ENCODE measurements at regions of chr17 and their contacts with region 1.

Region 1: GRCh38 chr17:28726226-28727130 is at the start of gene TLCD1:
- DNase-seq: peak; percentile 72 to 96
- H3K4me3 ChIP-seq: peak within 1 kb of the TSS; percentile 53 to 83
- H3K27ac ChIP-seq: peak within 1 kb of the TSS; percentile 93 to 95
- H3K4me1 ChIP-seq: peaks cover 13 to 23% of the 10 kb centered on the region in 2 donors
- H3K27me3 ChIP-seq: no peaks in the 10 kb centered on the region
- CTCF ChIP-seq: peak; percentile 99 to 100 (median 100)
- total RNA-seq, gene TLCD1: not detected

Region 2: GRCh38 chr17:28698253-28698941 is 28.1 kb before region 1 on chr17:
- intact Hi-C with region 1: no loop called
- DNase-seq: no peak
- H3K4me3 ChIP-seq: no peak overlapping the region
- H3K27ac ChIP-seq: no peak overlapping the region
- H3K4me1 ChIP-seq: no peaks in the 10 kb centered on the region
- H3K27me3 ChIP-seq: no peaks in the 10 kb centered on the region
- CTCF ChIP-seq: no peak

Region 3: GRCh38 chr17:28750178-28751047 is 23.9 kb after region 1 on chr17:
- intact Hi-C with region 1: loop called (anchors 1 kb)
- DNase-seq: peak; percentile 69 to 96
- H3K4me3 ChIP-seq: no peak overlapping the region
- H3K27ac ChIP-seq: no peak overlapping the region
- H3K4me1 ChIP-seq: peaks cover 10 to 16% of the 10 kb centered on the region in 2 donors
- H3K27me3 ChIP-seq: no peaks in the 10 kb centered on the region
- CTCF ChIP-seq: peak; percentile 100

Region 4: DNA sequence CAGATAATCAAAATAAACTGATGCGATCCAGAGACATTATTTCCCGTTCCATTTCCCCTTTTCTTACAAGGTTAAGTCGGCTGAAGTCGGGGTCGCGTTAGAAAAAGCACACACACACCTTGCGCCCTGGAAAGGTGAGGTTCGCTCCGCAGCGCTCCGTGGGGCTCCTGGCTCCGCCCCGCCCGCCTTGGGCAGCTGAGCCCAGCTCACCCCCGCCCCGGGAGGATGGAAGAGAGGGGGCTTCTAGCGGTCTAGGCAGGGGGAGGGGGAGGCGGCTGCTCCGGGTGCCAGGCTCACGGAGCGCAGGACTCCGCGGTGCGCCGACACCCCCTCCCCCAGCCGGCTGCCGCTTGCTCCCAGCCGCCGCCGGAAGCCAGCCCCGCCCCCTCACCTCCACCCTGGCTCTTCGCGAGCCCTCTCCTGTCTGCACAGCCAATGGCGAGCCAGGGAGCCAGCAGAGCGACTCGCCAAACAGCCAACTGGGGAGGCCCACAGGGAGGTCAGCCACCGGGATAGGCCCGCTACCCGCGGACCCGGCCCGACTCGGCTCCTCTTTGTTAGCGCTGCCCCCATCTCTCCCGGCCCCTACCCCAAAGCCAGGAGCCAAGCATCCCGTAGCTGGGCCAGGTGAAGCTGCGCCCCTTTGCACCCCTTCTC is 85.7 kb after region 1 on chr17:
- intact Hi-C with region 1: loop called (anchors 2 kb)
- DNase-seq: peak; percentile 93 to 98
- H3K4me3 ChIP-seq: peak overlapping the region; percentile 74 to 90
- H3K27ac ChIP-seq: peak overlapping the region; percentile 90
- H3K4me1 ChIP-seq: peaks cover 0 to 43% of the 10 kb centered on the region in 2 donors
- H3K27me3 ChIP-seq: no peaks in the 10 kb centered on the region
- CTCF ChIP-seq: no peak

Region 5: DNA sequence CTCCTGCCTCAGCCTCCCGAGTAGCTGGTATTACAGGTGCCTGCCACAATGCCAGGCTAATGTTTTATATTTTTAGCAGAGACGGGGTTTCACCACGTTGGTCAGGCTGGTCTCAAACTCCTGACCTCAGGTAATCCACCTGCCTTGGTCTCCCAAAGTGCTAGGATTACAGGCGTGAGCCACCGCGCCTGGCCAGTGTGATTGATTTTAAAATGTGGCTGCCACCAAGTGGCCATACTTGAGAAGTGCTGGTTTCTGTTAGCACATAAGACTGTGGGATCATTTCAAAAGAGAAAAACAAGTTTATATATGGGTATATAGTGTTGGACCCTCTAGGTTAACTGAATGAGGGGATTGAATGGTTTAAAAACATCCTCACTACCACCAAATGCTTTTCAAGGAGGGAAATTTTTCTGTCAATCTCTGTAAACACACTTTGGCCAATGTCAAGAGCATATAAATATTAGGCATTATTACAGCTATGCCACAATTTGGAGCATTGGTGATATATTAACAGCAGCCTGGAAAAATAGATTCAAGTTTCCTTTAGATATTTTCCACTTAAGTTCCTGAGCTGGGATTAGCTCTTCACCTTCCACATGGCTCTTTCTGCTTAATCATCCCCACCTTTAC is 189.9 kb after region 1 on chr17:
- intact Hi-C with region 1: loop called (anchors 2 kb)
- DNase-seq: no peak
- H3K4me3 ChIP-seq: no peak overlapping the region
- H3K27ac ChIP-seq: no peak overlapping the region
- H3K4me1 ChIP-seq: no peaks in the 10 kb centered on the region
- H3K27me3 ChIP-seq: no peaks in the 10 kb centered on the region
- CTCF ChIP-seq: peak; percentile 52 to 64 (median 62)

Region 6: GRCh38 chr17:29111816-29112499 is 385.5 kb after region 1 on chr17:
- intact Hi-C with region 1: loop called (anchors 10 kb)
- DNase-seq: peak in 1 of 2 donors; percentile 79
- H3K4me3 ChIP-seq: no peak overlapping the region
- H3K27ac ChIP-seq: no peak overlapping the region
- H3K4me1 ChIP-seq: peaks cover 3% of the 10 kb centered on the region in 2 donors
- H3K27me3 ChIP-seq: no peaks in the 10 kb centered on the region
- CTCF ChIP-seq: peak; percentile 69 to 86 (median 84)

Measured in ascending aorta (tissue), 2 donors.